ENCODE measurements at regions of chr20 and their contacts with region 1.

Region 1: DNA sequence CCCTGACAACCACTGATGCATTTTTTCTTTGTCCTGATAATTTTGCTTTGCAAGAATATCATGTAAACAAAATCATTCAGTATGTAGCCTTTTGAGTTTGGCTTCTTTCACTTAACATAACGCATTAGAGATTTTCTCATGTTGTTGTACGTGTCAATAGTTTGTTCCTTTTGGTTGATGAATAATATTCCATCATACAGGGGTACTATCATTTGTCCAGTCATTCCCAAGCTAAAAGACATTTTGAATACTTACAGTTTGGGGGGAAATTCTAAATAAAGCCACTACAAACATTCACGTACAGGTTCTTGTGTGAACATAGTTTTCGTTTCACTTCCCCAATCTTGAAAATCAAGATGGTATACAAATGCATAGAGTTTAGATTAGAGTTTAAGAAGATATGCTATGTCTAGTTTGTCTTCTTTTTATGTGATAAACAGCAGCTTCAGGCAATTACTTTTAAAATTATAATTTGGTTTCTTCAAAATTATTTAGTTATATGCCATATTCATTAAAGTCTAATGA is 5.2 kb downstream of the HAO1 start:
- DNase-seq: no peak
- H3K4me3 ChIP-seq: no peak overlapping the region
- H3K4me3 Mint-ChIP-seq: no peak overlapping the region
- H3K27ac ChIP-seq: no peak overlapping the region
- H3K27ac Mint-ChIP-seq: no peak overlapping the region
- H3K4me1 ChIP-seq: no peaks in the 10 kb centered on the region
- H3K4me1 Mint-ChIP-seq: peaks cover 0 to 5% (median 0%) of the 10 kb centered on the region in 4 donors
- H3K27me3 ChIP-seq: no peaks in the 10 kb centered on the region
- H3K27me3 Mint-ChIP-seq: peaks cover 5 to 21% of the 10 kb centered on the region in 2 donors

Region 2: DNA sequence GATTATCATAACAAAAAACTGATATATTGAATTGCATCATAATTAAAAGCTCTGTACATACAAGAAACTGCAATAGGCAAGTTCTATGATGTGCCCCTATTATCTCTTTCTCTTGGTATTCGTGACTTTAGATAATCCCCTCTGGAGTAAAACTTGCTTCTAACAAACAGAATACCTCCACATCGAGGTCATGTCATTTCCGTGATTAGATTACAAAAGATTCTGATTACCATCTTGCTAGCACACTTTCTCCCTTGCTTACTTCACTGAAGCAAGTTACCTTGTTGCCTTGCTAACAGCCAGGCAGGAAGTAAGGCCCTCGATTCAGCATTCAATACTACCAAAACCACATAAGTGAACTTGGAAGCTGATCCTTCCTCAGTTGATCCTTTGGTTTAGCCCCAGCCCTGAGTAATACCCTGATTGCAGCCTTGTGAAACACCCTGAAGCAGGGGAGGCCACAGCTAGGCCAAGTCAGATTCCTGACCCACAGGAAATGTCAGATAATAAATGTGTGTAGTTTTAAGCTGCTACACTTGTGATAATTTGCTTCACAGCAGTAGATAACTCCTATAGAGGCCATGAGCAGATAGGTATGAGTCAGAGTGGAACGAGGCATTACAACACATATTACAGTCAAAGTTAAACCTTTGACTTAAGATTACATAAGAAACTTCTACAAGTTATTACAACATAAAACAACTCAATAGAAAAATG is 138.2 kb after region 1 on chr20:
- CTCF ChIA-PET with region 1: no interaction called
- POLR2A ChIA-PET with region 1: no interaction called
- intact Hi-C with region 1: no loop called
- DNase-seq: peak; percentile 35 to 47 (median 41)
- H3K4me3 ChIP-seq: no peak overlapping the region
- H3K4me3 Mint-ChIP-seq: peak overlapping the region in 5 of 8 donors; percentile 2 to 77 (median 39)
- H3K27ac ChIP-seq: peak overlapping the region; percentile 11
- H3K27ac Mint-ChIP-seq: peak overlapping the region; percentile 60 to 94 (median 89)
- H3K4me1 ChIP-seq: peaks cover 14% of the 10 kb centered on the region
- H3K4me1 Mint-ChIP-seq: peaks cover 9 to 20% (median 11%) of the 10 kb centered on the region in 4 donors
- H3K27me3 ChIP-seq: no peaks in the 10 kb centered on the region
- H3K27me3 Mint-ChIP-seq: no peaks in the 10 kb centered on the region

Region 3: DNA sequence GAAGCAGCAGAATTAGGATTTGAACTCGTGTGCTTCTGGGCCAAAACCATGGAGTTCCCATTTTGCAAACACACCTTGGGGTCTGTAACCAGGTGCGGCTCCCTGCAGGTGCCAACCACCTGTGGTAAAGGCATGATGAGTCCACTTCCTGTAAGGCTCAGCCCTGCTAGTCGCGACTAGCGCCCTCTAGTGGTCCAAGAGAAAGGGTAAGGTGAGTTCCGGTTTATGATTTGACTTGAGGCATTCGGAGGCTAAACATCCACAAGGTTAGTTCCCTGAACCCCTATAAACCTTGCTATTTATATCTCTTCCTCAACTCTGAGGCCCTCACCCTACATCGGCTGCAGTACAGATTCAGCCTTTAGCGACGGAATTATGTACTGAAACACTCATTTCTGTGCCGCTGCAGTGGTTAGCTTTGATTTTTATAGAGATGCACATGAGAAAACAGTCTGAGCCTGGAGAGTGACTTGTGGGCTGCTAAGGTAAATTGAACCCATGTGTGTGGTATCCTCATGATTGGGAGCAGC is 370.4 kb after region 1 on chr20:
- CTCF ChIA-PET with region 1: interaction called, 5 read pairs
- POLR2A ChIA-PET with region 1: no interaction called
- intact Hi-C with region 1: loop called (anchors 1 kb)
- DNase-seq: peak; percentile 71 to 79 (median 73)
- H3K4me3 ChIP-seq: no peak overlapping the region
- H3K4me3 Mint-ChIP-seq: peak overlapping the region in 3 of 8 donors; percentile 1 to 31 (median 13)
- H3K27ac ChIP-seq: no peak overlapping the region
- H3K27ac Mint-ChIP-seq: peak overlapping the region in 5 of 7 donors; percentile 3 to 67 (median 47)
- H3K4me1 ChIP-seq: no peaks in the 10 kb centered on the region
- H3K4me1 Mint-ChIP-seq: peaks cover 3 to 12% (median 7%) of the 10 kb centered on the region in 4 donors
- H3K27me3 ChIP-seq: no peaks in the 10 kb centered on the region
- H3K27me3 Mint-ChIP-seq: no peaks in the 10 kb centered on the region

Measured in CD4-positive, alpha-beta memory T cell (primary cell).